MCF 10A (cell line): ENCODE measurements at regions of chr6 and their contacts with region 1.

Region 1: DNA sequence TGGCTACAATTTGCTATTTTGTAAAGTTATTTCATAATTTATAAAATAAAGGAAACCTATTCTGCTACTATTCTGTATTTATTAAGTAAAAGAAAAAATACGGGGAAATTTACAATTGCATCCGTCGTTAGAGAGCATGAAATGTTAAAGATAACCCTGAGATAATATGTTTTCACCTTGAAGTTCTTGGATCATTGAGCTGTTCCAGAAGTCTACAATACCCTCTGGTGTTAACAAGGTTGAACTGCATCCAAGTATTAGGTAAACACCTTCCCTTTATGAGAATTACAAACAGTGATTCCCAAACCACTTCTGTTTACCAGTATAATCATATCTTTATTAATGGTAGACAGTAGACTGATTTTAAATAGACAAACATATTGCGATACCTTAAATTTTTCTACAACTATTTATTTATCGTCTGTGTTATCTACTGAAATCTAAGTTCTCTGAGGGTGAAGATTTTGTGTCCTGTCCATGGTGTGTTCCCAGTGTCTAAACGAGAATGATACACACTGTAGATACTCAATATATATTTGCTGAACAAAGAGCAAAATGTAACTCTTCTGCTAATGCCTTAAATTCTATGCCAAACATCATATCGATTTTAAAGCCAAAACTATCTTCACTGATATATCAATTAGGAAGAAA is 28.2 kb downstream of the TBC1D32 start:
- DNase-seq: peak; percentile 64
- H3K4me3 Mint-ChIP-seq: no peak overlapping the region
- H3K27ac Mint-ChIP-seq: no peak overlapping the region
- H3K4me1 Mint-ChIP-seq: peaks cover 4% of the 10 kb centered on the region
- H3K27me3 Mint-ChIP-seq: no peaks in the 10 kb centered on the region
- CTCF ChIP-seq: peak; percentile 50

Region 2: DNA sequence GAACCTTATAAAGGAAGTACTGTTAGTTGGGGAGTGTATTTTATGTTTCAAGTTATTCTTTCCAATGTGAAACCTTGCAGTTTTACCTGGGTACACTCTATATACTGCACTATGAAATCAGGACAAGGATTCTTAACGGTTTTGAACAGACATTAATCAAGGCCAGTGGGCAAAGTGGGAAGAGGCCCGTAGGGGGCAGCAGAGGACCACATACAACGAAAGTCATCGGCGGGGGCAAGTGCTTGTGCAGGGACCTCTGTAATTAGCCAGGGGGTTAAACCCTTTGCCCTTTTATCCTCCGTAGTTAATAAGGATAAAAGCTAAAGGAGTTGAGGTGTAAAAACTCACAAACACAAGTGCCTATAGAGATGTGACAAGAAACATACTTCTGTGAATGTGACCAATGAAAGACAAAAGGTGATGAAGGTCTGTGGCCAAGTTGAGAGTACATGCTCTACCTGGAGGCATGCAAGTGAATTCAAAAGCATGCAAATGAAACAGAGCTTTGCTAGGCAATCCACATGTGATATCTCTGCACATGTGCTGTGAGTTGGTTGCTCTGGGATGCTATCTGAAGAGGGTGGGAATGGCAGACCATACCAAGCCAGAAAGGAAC is 1563.8 kb before region 1 on chr6:
- CTCF ChIA-PET with region 1: no interaction called
- POLR2A ChIA-PET with region 1: no interaction called
- intact Hi-C with region 1: loop called (anchors 5 kb)
- DNase-seq: peak; percentile 63
- H3K4me3 Mint-ChIP-seq: no peak overlapping the region
- H3K27ac Mint-ChIP-seq: no peak overlapping the region
- H3K4me1 Mint-ChIP-seq: no peaks in the 10 kb centered on the region
- H3K27me3 Mint-ChIP-seq: no peaks in the 10 kb centered on the region
- CTCF ChIP-seq: peak; percentile 80

Region 3: DNA sequence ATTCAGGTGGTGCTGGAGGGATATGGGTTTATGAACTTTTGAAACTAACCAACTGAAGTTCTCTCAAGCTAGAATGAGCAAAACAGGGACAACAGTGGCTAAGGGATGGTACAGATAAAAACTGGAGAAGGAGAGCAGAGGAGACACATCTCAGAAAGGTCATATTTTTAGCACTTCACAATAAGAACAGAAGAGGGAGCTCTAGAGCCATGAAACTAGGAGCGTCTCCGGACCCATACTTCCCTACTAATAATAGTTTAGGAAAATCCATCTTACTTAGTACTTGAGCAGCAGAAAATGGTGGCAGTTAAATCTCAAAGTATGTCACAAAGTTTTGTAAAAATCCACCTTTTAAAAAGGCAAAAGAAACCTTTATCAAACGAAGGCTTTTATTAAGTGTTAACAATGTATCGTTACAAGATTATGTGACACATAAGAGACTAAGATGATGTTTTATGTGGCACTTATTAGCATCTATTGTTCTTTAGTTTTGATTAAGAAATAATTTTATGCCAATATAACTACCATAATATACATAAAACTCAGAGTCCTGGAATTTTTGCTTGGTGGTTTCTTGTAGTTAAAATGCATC is 250.4 kb before region 1 on chr6:
- CTCF ChIA-PET with region 1: interaction called, 35 read pairs
- POLR2A ChIA-PET with region 1: interaction called, 3 read pairs
- intact Hi-C with region 1: loop called (anchors 1 kb)
- DNase-seq: peak; percentile 72
- H3K4me3 Mint-ChIP-seq: no peak overlapping the region
- H3K27ac Mint-ChIP-seq: no peak overlapping the region
- H3K4me1 Mint-ChIP-seq: no peaks in the 10 kb centered on the region
- H3K27me3 Mint-ChIP-seq: no peaks in the 10 kb centered on the region
- CTCF ChIP-seq: peak; percentile 67

Region 4: GRCh38 chr6:121222656-121223055 is 83.4 kb before region 1 on chr6:
- CTCF ChIA-PET with region 1: interaction called, 3 read pairs
- POLR2A ChIA-PET with region 1: no interaction called
- intact Hi-C with region 1: loop called (anchors 2 kb)
- DNase-seq: peak; percentile 48
- H3K4me3 Mint-ChIP-seq: no peak overlapping the region
- H3K27ac Mint-ChIP-seq: no peak overlapping the region
- H3K4me1 Mint-ChIP-seq: no peaks in the 10 kb centered on the region
- H3K27me3 Mint-ChIP-seq: no peaks in the 10 kb centered on the region
- CTCF ChIP-seq: peak; percentile 36

Region 5: GRCh38 chr6:122098201-122098678 is 792.2 kb after region 1 on chr6:
- CTCF ChIA-PET with region 1: no interaction called
- POLR2A ChIA-PET with region 1: no interaction called
- intact Hi-C with region 1: no loop called
- DNase-seq: no peak
- H3K4me3 Mint-ChIP-seq: no peak overlapping the region
- H3K27ac Mint-ChIP-seq: no peak overlapping the region
- H3K4me1 Mint-ChIP-seq: no peaks in the 10 kb centered on the region
- H3K27me3 Mint-ChIP-seq: peaks cover 53% of the 10 kb centered on the region
- CTCF ChIP-seq: no peak